ENCODE measurements at regions of chr9 and their contacts with region 1.

Region 1: GRCh38 chr9:92332577-92333281 is 7.0 kb downstream of the CENPP start:
- DNase-seq: no peak
- ATAC-seq: no peak
- H3K4me3 ChIP-seq: no peak overlapping the region
- H3K27ac ChIP-seq: no peak overlapping the region
- H3K4me1 ChIP-seq: peaks cover 0 to 5% of the 10 kb centered on the region in 2 donors
- H3K27me3 ChIP-seq: no peaks in the 10 kb centered on the region
- CTCF ChIP-seq: no peak
- POLR2A ChIP-seq: no peak

Region 2: GRCh38 chr9:92293452-92294296 is 39.1 kb before region 1 on chr9 and contains the start of gene IARS1:
- in situ Hi-C with region 1: no loop called
- intact Hi-C with region 1: no loop called
- DNase-seq: peak; percentile 97 to 99
- ATAC-seq: peak; percentile 93 to 94
- H3K4me3 ChIP-seq: peak within 1 kb of the TSS; percentile 71 to 88 (median 79)
- H3K27ac ChIP-seq: peak within 1 kb of the TSS; percentile 81 to 91 (median 88)
- H3K4me1 ChIP-seq: peaks cover 25 to 26% of the 10 kb centered on the region in 2 donors
- H3K27me3 ChIP-seq: no peaks in the 10 kb centered on the region
- CTCF ChIP-seq: peak in 3 of 5 experiments; percentile 23 to 36 (median 27)
- POLR2A ChIP-seq: peak; percentile 72 to 87
- total RNA-seq, gene IARS1: 87.0 to 111 (median 100) TPM

Region 3: GRCh38 chr9:92359394-92359995 is 26.8 kb after region 1 on chr9:
- in situ Hi-C with region 1: no loop called
- intact Hi-C with region 1: loop called (anchors 1 kb)
- DNase-seq: no peak
- ATAC-seq: no peak
- H3K4me3 ChIP-seq: no peak overlapping the region
- H3K27ac ChIP-seq: no peak overlapping the region
- H3K4me1 ChIP-seq: no peaks in the 10 kb centered on the region
- H3K27me3 ChIP-seq: no peaks in the 10 kb centered on the region
- CTCF ChIP-seq: no peak
- POLR2A ChIP-seq: no peak

Region 4: GRCh38 chr9:92373167-92373566 is 40.4 kb after region 1 on chr9:
- in situ Hi-C with region 1: no loop called
- intact Hi-C with region 1: no loop called
- DNase-seq: no peak
- ATAC-seq: no peak
- H3K4me3 ChIP-seq: no peak overlapping the region
- H3K27ac ChIP-seq: no peak overlapping the region
- H3K4me1 ChIP-seq: no peaks in the 10 kb centered on the region
- H3K27me3 ChIP-seq: no peaks in the 10 kb centered on the region
- CTCF ChIP-seq: no peak
- POLR2A ChIP-seq: no peak